Lower lobe of right lung (tissue), 2 donors: ENCODE measurements at regions of chr1 and their contacts with region 1.

Region 1: DNA sequence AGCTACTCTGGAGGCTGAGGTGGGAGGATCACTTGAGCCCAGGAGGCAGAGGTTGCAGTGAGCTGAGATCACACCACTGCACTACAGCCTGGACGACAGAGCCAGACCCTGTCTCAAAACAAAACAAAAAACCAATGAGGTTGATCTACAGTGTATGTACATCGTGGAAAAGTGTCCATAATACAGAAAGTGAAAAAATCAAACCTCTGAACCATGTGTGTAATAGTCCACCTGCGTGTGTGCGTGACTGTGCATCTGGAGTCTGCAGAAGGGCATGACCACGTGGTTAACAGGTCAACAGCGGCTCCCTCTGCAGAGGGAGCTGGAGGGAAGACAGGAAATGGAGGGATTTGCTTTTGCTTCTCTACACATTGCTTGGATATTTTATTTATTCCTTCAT is 32.4 kb upstream of the ENO1 start:
- DNase-seq: no peak
- ATAC-seq: no peak
- H3K4me3 ChIP-seq: no peak overlapping the region
- H3K27ac ChIP-seq: no peak overlapping the region
- H3K4me1 ChIP-seq: no peaks in the 10 kb centered on the region
- H3K27me3 ChIP-seq: no peaks in the 10 kb centered on the region
- CTCF ChIP-seq: no peak

Region 2: GRCh38 chr1:8987881-8988617 is 77.1 kb after region 1 on chr1:
- intact Hi-C with region 1: loop called (anchors 10 kb)
- DNase-seq: peak; percentile 57
- ATAC-seq: peak; percentile 77 to 82
- H3K4me3 ChIP-seq: no peak overlapping the region
- H3K27ac ChIP-seq: no peak overlapping the region
- H3K4me1 ChIP-seq: peaks cover 23% of the 10 kb centered on the region
- H3K27me3 ChIP-seq: no peaks in the 10 kb centered on the region
- CTCF ChIP-seq: peak; percentile 94